ENCODE measurements at regions of chr17 and their contacts with region 1.

Region 1: GRCh38 chr17:63621766-63622519 is at the start of gene MAP3K3:
- ATAC-seq: peak; percentile 82 to 93 (median 91)
- H3K4me3 ChIP-seq: peak within 1 kb of the TSS; percentile 61 to 90 (median 75)
- H3K27ac ChIP-seq: peak within 1 kb of the TSS; percentile 76 to 78
- H3K4me1 ChIP-seq: peaks cover 3 to 11% of the 10 kb centered on the region in 2 donors
- total RNA-seq, gene MAP3K3: 11.0 to 25.4 (median 15.1) TPM

Region 2: GRCh38 chr17:63445979-63446691 is 175.8 kb before region 1 on chr17 and contains the start of gene CYB561:
- in situ Hi-C with region 1: loop called in 4 of 9 experiments (anchors 25 kb)
- ATAC-seq: peak; percentile 75 to 92 (median 86)
- H3K4me3 ChIP-seq: peak within 1 kb of the TSS; percentile 47 to 80 (median 56)
- H3K27ac ChIP-seq: no peak within 1 kb of the TSS
- H3K4me1 ChIP-seq: peaks cover 0 to 16% of the 10 kb centered on the region in 2 donors
- total RNA-seq, gene CYB561: 4.7 to 45.4 (median 6.6) TPM

Measured in motor neuron (in vitro differentiated cells).